ENCODE measurements at regions of chr3 and their contacts with region 1.

Region 1: DNA sequence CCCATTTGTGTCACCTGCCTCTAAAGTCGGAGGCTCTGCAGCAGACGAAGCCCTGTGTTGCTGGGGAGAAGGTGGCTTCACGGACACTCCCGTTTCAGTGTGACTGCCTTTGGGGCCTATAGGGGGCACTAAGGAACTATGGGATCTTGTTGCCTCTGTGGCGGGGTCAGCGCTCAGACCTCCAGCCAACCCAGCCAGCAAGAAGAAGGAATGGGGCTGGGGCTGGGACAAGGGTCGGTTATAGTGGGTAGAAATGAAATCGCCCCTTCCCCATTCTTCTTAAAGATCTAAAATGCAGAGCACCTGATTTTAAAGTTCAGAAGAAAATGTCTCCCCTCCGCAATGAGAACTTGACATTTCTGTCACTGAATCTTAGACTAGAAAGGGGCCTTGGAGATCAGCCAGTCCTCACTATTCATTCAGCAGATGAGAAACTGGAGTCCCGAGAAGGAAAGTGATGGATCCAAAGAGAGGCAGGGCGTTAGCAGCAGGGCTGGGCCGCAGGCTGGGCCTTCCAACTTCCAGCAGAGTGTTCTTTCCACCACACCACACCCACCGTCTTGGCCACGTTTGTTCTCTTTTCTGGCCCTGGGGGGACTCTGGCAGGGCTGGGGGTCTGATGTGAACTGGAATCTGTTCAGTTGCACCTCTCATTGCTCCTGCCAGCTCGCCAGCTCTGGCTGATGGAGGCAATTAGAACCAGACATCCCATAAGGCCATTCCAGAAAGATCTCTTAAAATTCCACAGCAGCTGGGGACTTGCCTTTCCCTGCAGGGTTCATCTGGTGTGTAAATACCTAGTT is 195.4 kb downstream of the OPA1 start:
- DNase-seq: peak; percentile 73
- ATAC-seq: peak; percentile 93

Region 2: DNA sequence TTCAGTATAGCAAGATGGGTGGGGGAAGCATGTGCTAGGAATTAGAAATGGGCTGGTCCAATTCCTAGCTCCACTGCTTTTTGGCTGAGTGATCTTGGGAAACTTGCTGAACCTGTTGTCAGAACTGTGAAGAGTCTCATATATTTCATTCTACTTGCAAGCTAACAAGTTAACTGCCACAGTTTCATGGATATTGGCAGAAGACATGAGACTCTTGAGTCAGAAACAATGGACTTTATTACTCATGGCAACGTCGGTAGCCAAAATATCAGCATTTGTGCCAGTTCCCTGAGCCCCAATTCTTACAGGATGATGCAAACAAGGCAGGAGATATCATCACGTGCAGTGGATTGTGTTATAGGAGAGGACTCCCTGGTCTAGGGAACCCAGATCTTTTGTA is 573.9 kb before region 1 on chr3:
- intact Hi-C with region 1: no loop called
- DNase-seq: no peak
- ATAC-seq: no peak

Region 3: DNA sequence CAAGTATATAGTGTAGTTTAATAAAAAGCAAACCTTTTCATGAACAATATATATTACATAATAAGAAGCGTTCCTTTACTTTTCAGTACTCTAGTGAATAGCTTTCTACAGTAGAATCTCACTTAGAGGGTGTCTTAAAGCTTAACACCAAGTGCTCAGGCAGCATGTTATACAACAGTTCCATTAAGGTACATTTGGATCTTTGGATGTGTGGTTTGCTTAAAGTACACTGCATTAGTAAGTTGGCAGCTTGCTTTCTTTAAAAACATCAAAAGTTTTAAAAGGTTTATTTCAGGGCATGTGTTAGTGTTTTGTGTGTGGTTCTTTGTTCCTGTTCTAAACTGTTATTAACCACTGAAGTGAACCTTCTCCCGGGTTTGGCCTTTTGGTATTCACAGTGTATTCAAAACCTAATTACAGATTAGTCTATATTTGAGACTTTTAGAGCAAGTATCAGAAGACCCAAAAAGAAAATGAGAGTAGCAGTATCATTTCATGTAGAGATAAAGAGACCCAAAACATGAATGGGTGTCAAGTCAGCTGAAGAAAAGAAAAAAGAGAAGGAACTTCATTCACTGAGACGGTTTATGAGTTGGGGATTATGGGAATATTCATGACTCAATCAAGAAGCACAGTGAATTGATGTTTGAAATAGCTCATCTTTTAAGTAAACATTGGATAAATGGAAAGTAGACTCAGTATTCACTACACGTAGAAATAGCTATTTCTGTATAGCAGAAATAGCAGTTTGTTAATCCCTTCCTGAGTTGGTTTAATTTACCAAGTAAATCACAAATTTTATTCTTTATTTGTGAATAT is 101.5 kb before region 1 on chr3:
- intact Hi-C with region 1: no loop called
- DNase-seq: no peak
- ATAC-seq: no peak

Region 4: DNA sequence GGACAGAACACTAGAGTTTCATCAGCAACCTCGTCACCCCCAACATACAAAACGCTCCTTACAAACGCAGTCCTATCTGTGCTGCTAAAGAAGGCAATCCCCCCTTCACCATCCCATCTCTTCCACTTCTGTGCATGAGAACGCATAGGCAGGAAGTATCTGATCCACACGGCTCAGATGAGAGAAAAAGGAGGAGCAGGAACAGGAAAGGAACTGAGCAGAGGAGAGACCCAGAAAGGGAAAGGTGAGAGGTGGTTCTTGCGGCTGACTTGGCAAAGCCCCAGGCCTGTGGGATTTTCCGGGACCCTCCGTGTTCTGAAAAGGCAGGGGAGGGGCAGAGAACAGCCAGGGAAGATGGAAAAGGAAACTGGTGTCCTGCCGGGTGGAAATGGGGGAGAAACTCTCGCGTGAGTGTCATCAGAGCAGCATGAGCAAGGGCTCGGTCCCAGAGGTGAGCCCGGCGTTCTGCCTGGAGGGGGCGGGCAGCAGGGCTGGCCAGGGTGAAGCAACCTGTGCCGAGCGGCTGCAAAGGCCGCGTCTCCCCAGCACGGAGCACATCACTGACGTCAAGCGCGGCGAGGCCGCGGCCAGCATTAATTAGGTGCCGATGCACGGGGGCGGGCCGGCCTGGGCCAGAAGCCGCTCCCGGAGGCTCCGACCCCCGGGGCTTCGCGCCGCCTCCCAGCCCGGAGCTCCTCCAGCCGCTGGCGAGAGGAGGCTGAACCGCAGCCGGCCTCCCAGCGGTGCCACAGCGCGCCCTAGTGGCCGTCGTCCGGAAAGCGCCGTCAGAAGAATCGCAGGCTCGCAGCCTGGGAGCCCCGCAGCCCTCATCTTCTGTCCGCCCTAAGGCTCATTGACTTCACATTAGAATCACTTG is 526.9 kb after region 1 on chr3:
- intact Hi-C with region 1: loop called (anchors 5 kb)
- DNase-seq: peak; percentile 95
- ATAC-seq: peak; percentile 84